Adrenal gland (tissue), 19 donors: ENCODE measurements at regions of chr3 and their contacts with region 1.

Region 1: DNA sequence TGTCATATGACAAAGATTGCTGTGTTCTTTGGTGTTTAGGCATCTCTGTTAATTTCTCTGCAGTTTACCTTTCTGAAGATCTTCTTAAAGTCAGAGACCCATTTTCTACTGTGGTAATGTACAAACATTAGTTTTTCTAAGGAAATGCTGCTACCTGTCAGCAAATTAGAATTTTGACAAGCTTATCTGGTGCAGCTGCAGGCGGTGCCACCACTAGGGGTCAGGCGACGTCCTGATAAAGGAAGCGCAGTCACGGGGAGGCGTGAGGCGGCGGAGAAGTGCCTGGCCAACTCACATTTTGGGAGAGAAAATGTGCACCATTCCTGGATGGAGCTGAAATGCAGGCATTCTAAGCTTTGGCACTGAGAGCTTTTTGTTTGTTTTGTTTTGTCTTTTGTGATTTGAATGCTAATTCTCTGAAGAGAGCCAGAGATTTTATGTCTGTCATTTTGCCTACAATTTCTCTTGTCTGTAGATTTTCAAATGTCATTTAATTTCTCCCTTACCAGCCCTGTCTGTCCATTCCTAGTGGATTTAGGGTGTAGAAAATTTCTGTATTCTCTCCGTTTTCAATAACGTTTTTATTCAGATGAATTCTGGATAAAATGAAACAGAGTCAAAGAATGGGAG is 24.9 kb upstream of the SIAH2 start:
- DNase-seq: peak; percentile 86 to 93 (median 91)
- H3K4me3 ChIP-seq: no peak overlapping the region
- H3K27ac ChIP-seq: no peak overlapping the region
- H3K4me1 ChIP-seq: no peaks in the 10 kb centered on the region
- H3K27me3 ChIP-seq: no peaks in the 10 kb centered on the region
- CTCF ChIP-seq: peak; percentile 81 to 96 (median 91)
- POLR2A ChIP-seq: no peak

Region 2: DNA sequence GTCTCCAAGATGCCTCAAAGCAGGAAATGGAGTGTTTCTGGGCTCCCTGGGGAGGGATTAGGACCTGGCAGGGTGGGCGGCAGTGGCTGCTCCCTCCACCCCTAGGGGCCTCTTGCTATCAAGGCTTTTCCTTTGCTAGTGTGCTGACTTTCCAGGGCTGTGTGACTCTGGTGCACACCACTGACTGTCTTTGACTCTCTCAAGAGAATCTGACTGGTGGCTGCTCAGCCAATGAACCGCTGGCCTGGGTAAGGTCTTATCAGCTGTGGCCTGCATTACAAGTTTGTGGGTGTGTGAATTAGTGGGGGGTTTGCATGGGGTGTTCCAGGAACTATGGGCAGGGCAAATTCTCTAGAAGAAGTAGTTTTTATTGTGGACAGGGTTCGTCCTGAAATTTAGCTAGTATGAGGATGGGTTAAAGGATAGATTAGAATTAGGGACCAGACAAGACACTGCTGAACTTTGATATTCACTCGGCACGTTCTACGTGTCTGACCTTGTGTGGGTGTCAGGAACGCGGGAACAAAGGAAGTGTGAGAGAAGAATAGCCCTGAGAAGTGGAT is 54.4 kb before region 1 on chr3:
- intact Hi-C with region 1: no loop called
- DNase-seq: peak in 3 of 7 donors; percentile 55 to 74 (median 66)
- H3K4me3 ChIP-seq: no peak overlapping the region
- H3K27ac ChIP-seq: peak overlapping the region; percentile 1 to 91 (median 44)
- H3K4me1 ChIP-seq: peaks cover 29 to 54% of the 10 kb centered on the region in 2 donors
- H3K27me3 ChIP-seq: no peaks in the 10 kb centered on the region
- CTCF ChIP-seq: peak in 1 of 6 experiments; percentile 4
- POLR2A ChIP-seq: peak in 1 of 2 donors; percentile 13

Region 3: GRCh38 chr3:150861851-150862250 is 74.0 kb after region 1 on chr3:
- intact Hi-C with region 1: loop called in 1 of 2 experiments (anchors 5 kb)
- DNase-seq: no peak
- H3K4me3 ChIP-seq: no peak overlapping the region
- H3K27ac ChIP-seq: no peak overlapping the region
- H3K4me1 ChIP-seq: no peaks in the 10 kb centered on the region
- H3K27me3 ChIP-seq: no peaks in the 10 kb centered on the region
- CTCF ChIP-seq: no peak
- POLR2A ChIP-seq: no peak